ENCODE measurements at regions of chr1 and their contacts with region 1.

Region 1: DNA sequence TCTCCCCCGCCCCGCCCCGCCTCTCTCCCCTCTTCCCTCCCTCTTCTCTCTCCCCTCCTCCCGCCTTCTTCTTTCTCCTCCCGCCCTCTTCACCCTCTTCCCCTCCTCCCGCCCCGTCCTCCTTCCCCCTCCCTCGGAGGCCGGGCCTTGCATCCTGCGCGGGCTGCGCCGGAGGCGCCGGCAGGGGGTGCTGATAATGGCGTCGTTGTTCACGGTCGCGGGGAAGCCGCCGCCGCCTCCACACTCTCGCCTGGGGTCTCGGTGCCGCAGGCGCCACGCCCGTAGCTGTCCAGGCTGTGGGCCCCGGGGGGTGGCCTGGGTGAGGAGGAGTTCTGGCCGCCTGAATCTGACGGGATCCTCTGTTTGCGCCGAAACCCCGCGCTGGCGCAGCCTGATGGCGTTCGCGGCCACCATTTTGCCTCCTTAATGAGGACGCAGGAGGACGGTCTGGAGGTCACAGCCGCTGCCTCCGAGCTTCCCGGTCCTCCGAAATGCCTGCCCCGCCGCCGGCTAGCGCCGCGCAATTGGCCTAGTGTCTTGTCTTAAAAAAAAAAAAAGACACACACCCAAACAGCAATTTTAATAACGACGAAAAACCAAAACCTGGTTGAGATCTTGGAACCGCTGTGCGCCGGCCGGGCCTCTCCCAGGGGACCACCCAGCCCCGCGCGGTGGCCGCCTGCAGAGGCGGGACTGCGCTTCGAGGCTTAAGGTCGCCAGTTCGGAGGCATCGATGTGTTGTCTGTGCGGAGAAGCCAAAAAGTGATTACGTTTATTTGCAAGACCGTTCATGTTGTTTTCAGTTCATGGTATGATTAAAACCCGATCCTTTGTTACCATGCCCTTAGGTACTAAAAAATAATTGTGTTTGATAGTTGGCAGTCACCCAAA is 106.6 kb upstream of the HNRNPU start:
- DNase-seq: peak; percentile 71
- H3K4me3 ChIP-seq: peak overlapping the region; percentile 69
- CTCF ChIP-seq: peak; percentile 81

Region 2: GRCh38 chr1:244952940-244953339 is 18.0 kb before region 1 on chr1:
- CTCF ChIA-PET with region 1: no interaction called
- POLR2A ChIA-PET with region 1: no interaction called
- DNase-seq: no peak
- H3K4me3 ChIP-seq: no peak overlapping the region
- CTCF ChIP-seq: no peak

Region 3: GRCh38 chr1:244988521-244988920 is 17.6 kb after region 1 on chr1:
- CTCF ChIA-PET with region 1: interaction called, 15 read pairs
- POLR2A ChIA-PET with region 1: no interaction called
- DNase-seq: no peak
- H3K4me3 ChIP-seq: no peak overlapping the region
- CTCF ChIP-seq: no peak

Region 4: GRCh38 chr1:245000872-245001188 is 29.9 kb after region 1 on chr1:
- CTCF ChIA-PET with region 1: no interaction called
- POLR2A ChIA-PET with region 1: no interaction called
- DNase-seq: no peak
- H3K4me3 ChIP-seq: no peak overlapping the region
- CTCF ChIP-seq: no peak

Region 5: DNA sequence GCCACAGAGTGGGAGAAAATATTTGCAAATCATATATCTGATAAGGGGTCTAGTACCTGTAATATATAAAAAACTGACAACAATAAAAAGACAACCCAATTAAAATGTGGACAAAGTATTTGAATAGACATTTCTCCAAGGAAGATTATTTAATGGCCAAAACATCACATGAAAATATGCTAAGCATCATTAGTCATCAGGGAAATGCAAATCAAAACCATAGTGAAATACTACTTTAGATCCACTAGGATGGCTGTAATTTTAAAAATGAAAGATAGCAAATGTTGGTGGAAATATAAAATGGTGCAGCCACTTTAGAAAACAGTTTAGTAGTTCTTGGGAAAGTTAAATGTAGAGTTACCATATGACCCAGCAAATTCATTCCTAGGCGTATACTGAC is 65.2 kb after region 1 on chr1:
- CTCF ChIA-PET with region 1: no interaction called
- POLR2A ChIA-PET with region 1: no interaction called
- DNase-seq: no peak
- H3K4me3 ChIP-seq: no peak overlapping the region
- CTCF ChIP-seq: no peak

Region 6: GRCh38 chr1:245099401-245099800 is 128.5 kb after region 1 on chr1:
- CTCF ChIA-PET with region 1: no interaction called
- POLR2A ChIA-PET with region 1: no interaction called
- DNase-seq: no peak
- H3K4me3 ChIP-seq: no peak overlapping the region
- CTCF ChIP-seq: no peak

Measured in AG04449 (cell line).